Activated CD4-positive, alpha-beta memory T cell treated with anti-CD3 and anti-CD28 coated beads for 36 hours (primary cell): ENCODE measurements at regions of chr3 and their contacts with region 1.

Region 1: GRCh38 chr3:48240711-48241491 is at the start of gene ZNF589:
- DNase-seq: peak; percentile 96
- H3K4me3 Mint-ChIP-seq: peak within 1 kb of the TSS; percentile 88
- H3K27ac Mint-ChIP-seq: peak within 1 kb of the TSS; percentile 92
- H3K4me1 Mint-ChIP-seq: peaks cover 21% of the 10 kb centered on the region
- H3K27me3 Mint-ChIP-seq: no peaks in the 10 kb centered on the region
- total RNA-seq, gene ZNF589: 28.0 to 31.4 TPM

Region 2: DNA sequence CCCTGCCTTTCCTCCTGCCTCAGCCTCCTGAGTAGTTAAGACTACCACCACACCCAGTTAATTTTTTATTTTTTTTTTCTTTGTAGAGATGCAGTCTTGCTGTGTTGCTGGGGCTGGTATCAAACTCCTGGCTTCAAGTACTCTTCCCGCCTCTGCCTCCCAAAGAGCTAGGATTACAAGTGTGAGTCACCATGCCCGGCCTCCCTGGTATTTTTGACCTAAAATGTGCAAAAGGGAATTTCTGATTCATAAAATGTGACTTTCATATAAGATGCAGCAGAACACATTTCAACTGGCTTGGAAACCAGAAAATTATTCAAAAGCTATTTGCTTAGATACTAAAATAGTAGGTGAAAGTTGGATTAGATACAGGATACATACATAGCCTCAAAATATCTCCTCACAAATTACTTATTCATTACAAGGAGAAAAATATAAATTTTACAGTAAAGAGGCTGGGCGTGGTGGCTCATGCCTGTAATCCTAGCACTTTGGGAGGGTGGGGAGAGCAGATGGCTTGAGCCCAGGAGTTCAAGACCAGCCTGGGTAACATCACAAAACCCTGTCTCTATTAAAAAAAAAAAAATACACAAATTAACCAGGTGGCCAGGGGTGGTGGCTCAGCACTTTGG is 256.7 kb before region 1 on chr3:
- CTCF ChIA-PET with region 1: no interaction called
- POLR2A ChIA-PET with region 1: no interaction called
- intact Hi-C with region 1: no loop called
- DNase-seq: no peak
- H3K4me3 Mint-ChIP-seq: no peak overlapping the region
- H3K27ac Mint-ChIP-seq: no peak overlapping the region
- H3K4me1 Mint-ChIP-seq: peaks cover 3% of the 10 kb centered on the region
- H3K27me3 Mint-ChIP-seq: no peaks in the 10 kb centered on the region

Region 3: DNA sequence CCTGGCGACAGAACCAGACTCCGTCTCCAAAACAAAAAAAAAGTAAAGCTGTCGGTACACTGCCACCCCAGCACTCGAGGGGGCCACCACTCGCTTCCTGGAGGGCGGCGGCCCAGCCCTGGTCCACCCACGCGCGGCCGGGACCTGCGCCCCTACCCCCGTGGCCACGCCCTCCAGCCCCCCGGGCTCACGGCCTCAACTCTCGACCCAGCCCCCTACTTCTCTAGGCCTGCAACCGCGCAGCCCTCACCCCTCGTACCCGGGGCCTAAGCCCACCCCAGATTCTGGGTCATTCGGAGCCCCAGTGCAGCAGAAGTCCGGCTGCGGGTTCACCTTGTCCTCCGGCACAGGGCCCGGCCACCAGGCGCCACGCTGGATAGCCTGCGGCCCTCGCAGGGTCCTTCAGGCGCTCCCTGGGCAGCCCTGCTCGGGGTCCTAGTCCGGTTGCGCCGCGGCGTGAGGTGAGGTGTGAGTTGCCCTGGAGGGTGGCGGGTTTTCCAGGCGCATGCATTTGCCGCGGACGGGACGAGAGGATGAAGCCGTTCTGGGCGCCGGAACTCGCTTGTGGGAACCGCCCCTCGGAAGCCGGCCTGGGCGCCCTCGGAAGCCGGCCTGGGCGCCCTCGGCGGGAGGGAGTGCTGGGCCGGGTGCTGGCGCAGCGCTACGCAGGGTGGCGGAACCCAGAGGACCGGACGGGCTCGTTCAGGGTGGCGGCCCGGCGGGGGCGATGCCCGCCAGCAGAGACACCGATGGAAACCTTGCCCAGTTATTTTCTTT is 60.3 kb after region 1 on chr3:
- CTCF ChIA-PET with region 1: interaction called, 3 read pairs
- POLR2A ChIA-PET with region 1: interaction called, 11 read pairs
- intact Hi-C with region 1: loop called (anchors 1 kb)
- DNase-seq: peak; percentile 95
- H3K4me3 Mint-ChIP-seq: peak within 1 kb of the TSS; percentile 96
- H3K27ac Mint-ChIP-seq: peak within 1 kb of the TSS; percentile 98
- H3K4me1 Mint-ChIP-seq: peaks cover 34% of the 10 kb centered on the region
- H3K27me3 Mint-ChIP-seq: no peaks in the 10 kb centered on the region

Region 4: DNA sequence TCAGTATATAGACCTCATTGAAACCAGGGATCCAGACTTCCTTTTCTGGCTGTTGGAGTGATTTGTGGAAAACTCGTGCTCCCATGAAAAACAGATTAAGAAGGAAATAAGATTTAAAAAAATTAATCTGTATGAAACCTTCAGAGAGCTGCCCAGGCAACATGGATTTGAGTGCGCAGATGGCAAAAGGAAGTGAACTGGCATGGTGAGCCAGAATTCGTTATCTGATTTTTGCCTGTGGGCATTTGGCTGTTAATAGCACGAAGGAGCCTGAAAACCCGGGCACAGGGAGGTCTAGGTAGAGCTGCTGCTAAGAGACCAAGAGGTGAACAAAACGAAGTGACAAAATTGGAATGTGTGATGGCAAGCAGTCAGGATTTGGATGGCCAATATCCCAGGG is 111.6 kb after region 1 on chr3:
- CTCF ChIA-PET with region 1: no interaction called
- POLR2A ChIA-PET with region 1: no interaction called
- intact Hi-C with region 1: no loop called
- DNase-seq: no peak
- H3K4me3 Mint-ChIP-seq: no peak overlapping the region
- H3K27ac Mint-ChIP-seq: no peak overlapping the region
- H3K4me1 Mint-ChIP-seq: no peaks in the 10 kb centered on the region
- H3K27me3 Mint-ChIP-seq: peaks cover 11% of the 10 kb centered on the region